Panc1 (cell line): ENCODE measurements at regions of chr4 and their contacts with region 1.

Region 1: DNA sequence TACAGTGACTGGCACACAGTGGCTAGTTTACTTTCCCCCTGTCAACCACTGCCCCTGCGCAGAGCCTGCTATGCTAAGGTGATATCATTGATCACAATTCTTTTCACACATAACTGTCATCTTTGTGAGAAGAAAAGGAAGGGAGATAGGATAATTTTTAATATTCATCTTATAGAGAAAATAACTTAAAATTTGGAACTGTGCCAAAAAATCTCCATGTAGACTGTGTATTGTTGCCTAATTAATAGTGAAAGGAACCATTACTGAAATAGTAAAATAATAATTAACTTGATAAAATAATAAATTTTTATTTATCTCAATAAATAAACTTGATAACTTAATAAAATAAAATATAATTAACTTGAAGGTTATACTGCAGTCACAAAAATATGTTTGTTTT is 1069.4 kb downstream of the C4orf33 start:
- DNase-seq: no peak
- ATAC-seq: no peak
- H3K4me3 ChIP-seq: no peak overlapping the region
- H3K27ac ChIP-seq: no peak overlapping the region
- H3K4me1 ChIP-seq: no peaks in the 10 kb centered on the region
- H3K27me3 ChIP-seq: no peaks in the 10 kb centered on the region
- CTCF ChIP-seq: no peak

Region 2: DNA sequence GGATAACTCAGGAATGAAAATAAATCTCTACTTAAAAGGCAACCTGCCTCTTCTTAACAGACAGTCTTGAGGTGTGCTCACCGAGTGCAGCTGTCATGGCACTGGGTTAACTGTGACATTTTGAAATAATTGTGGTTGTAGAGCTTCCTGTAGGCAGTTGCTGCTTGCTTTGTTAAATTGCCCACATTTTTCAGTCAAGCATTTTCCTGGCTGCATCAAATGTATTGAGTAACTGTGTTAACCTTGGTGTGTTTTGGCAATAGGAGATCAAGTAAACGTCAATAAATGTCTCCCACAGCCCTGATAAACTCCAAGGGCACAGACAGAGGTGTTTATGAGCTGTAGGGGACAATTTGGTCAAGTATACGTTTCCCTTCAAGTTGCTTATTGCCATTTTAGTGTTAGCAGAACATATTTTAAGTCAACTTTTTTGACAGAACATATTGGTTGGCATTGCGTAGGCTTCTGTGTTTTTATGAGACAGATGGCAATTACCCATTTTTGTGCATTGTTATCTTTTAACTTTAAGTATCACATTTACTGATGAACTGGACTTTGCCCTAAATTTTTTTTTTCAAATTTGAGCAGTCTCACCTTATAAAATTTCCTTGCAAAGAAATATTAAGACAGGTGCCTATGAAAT is 542.0 kb before region 1 on chr4:
- CTCF ChIA-PET with region 1: no interaction called
- POLR2A ChIA-PET with region 1: no interaction called
- in situ Hi-C with region 1: no loop called
- intact Hi-C with region 1: loop called (anchors 5 kb)
- DNase-seq: no peak
- ATAC-seq: no peak
- H3K4me3 ChIP-seq: no peak overlapping the region
- H3K27ac ChIP-seq: no peak overlapping the region
- H3K4me1 ChIP-seq: no peaks in the 10 kb centered on the region
- H3K27me3 ChIP-seq: no peaks in the 10 kb centered on the region
- CTCF ChIP-seq: no peak

Region 3: GRCh38 chr4:130125467-130125866 is 39.9 kb before region 1 on chr4:
- CTCF ChIA-PET with region 1: no interaction called
- POLR2A ChIA-PET with region 1: no interaction called
- in situ Hi-C with region 1: no loop called
- intact Hi-C with region 1: no loop called
- DNase-seq: no peak
- ATAC-seq: no peak
- H3K4me3 ChIP-seq: no peak overlapping the region
- H3K27ac ChIP-seq: no peak overlapping the region
- H3K4me1 ChIP-seq: no peaks in the 10 kb centered on the region
- H3K27me3 ChIP-seq: no peaks in the 10 kb centered on the region
- CTCF ChIP-seq: no peak